WTC11 (cell line): ENCODE measurements at regions of chr17 and their contacts with region 1.

Region 1: GRCh38 chr17:82037113-82037888 is at the start of gene DCXR:
- DNase-seq: peak; percentile 99
- ATAC-seq: peak; percentile 90
- H3K4me3 Mint-ChIP-seq: peak within 1 kb of the TSS; percentile 75
- H3K27ac Mint-ChIP-seq: peak within 1 kb of the TSS; percentile 95
- H3K4me1 Mint-ChIP-seq: peaks cover 33% of the 10 kb centered on the region
- H3K27me3 Mint-ChIP-seq: peaks cover 10% of the 10 kb centered on the region
- CTCF ChIP-seq: peak; percentile 73
- total RNA-seq, gene DCXR: 114 to 130 TPM (median 120 TPM) in 3 replicates

Region 2: GRCh38 chr17:81840826-81841778 is 196.2 kb before region 1 on chr17:
- CTCF ChIA-PET with region 1: no interaction called
- POLR2A ChIA-PET with region 1: no interaction called
- DNase-seq: no peak
- ATAC-seq: peak; percentile 22
- H3K4me3 Mint-ChIP-seq: no peak overlapping the region
- H3K27ac Mint-ChIP-seq: no peak overlapping the region
- H3K4me1 Mint-ChIP-seq: no peaks in the 10 kb centered on the region
- H3K27me3 Mint-ChIP-seq: no peaks in the 10 kb centered on the region
- CTCF ChIP-seq: no peak

Region 3: DNA sequence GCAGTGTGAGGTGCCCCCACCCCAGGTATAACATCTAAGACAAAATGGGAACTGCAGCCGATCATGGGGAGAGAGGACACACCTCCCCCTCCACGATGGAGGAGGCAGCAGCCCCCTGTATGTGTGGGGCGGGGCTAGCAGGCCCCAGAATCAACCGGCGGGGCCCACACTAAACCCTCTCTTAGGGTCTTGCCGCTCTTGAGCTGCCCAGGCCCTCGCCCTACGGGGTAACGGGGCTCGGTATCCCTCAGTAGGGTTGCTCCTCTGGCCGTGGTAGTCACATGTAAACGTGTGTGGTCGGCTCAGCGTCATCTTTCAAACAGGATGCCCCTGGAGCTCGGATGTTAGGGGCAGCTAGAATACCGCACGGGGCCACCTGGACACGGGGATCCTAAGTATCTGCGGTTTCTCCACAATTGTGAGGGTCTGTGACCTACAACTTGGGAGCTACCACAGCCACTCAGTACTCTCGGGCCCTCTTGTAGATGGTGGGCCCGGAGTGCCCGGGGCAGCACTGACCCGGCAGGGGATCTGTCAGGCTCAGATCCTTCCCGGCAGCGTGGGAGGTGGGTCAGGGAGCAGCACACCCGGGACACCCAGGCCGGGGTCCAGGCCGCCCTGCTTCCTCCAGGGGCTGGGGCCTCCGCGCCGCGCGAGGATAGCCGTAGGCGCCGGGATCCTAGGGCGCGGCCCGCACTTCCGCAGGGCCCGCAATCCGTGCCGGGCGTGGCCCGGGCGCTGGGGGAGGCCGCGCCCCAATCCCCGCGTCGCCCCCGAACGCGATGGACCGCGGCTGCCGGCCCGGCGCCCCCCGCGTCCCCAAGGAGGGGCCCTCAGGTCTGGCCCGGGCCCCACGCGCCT is 167.0 kb before region 1 on chr17:
- CTCF ChIA-PET with region 1: interaction called, 12 read pairs
- POLR2A ChIA-PET with region 1: no interaction called
- DNase-seq: peak; percentile 34
- ATAC-seq: peak; percentile 4
- H3K4me3 Mint-ChIP-seq: peak overlapping the region; percentile 76
- H3K27ac Mint-ChIP-seq: peak overlapping the region; percentile 88
- H3K4me1 Mint-ChIP-seq: peaks cover 16% of the 10 kb centered on the region
- H3K27me3 Mint-ChIP-seq: no peaks in the 10 kb centered on the region; the same call in 1 of the 2 replicates
- CTCF ChIP-seq: no peak

Region 4: DNA sequence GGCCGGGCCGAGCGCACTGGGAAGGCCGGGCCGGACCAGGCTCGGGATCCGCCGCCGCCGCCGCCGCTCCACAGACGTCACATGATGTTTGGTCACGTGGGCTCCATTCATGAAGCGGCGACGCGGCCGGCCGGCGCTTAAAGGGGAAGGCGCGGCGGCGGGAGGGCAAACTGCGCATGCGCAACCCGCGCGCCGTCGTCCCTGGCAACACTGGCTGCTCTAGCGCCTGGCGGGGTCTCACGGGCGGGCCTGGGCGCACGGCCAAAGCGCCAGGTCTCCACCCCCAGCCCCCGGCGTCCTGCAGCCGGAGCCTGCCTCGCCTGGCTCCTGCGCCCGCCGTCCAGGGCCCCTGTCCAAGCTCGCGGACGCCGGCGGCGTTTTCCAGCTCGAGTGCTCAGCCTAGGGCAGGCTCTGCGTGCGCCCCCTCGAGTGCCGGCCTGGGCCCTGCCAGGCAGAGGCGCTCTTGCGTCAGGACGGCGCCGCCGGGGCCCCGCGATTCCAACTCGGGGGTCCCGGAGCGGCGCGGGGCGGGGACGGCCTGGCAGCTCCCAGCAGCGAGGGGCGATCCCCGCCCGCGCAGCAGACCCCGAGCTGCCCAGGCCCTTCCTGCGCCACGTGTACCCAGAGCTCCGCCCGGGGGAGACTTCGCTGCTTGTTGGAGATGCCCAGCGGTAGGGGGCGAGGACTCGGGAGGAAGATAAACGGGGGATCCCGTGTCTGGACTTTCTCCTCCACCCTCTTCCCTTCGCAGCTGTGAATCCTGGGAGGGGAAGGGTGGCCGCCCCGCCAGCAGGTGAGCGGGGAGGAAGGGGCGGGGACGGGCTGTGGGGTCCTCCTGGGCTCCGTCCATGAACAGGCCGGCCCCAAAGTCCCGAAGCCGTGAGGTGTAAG is 109.4 kb before region 1 on chr17 and contains the start of gene MAFG:
- CTCF ChIA-PET with region 1: interaction called, 16 read pairs
- POLR2A ChIA-PET with region 1: no interaction called
- DNase-seq: peak; percentile 90
- ATAC-seq: peak; percentile 43
- H3K4me3 Mint-ChIP-seq: peak within 1 kb of the TSS; percentile 75
- H3K27ac Mint-ChIP-seq: no peak within 1 kb of the TSS
- H3K4me1 Mint-ChIP-seq: peaks cover 27% of the 10 kb centered on the region
- H3K27me3 Mint-ChIP-seq: peaks cover 3% of the 10 kb centered on the region; the same call in 1 of the 2 replicates
- CTCF ChIP-seq: no peak
- total RNA-seq, gene MAFG: 24.2 to 29.8 TPM (median 24.3 TPM) in 3 replicates

Region 5: DNA sequence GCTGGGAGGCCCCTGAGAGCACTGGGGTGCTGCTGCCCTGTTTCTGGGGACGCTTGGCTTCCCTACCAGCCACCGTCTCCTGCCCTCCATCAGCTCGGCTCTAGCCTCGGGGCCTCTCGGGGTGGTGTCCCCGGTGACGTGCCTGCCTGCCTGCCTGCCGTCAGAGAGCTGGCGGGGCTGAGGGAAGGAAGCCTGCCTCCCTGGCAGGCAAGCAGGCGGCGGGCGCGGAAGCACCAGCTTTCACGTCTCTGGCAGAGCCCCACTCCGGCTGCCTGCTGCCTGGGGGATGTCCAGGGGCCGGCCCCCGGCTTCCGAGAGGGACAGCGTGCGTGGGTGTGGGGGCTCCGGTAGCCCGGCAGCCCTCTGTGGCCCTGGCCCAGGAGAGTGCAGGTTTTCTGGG is 24.0 kb before region 1 on chr17:
- CTCF ChIA-PET with region 1: interaction called, 119 read pairs
- POLR2A ChIA-PET with region 1: no interaction called
- DNase-seq: no peak
- ATAC-seq: no peak
- H3K4me3 Mint-ChIP-seq: no peak overlapping the region
- H3K27ac Mint-ChIP-seq: no peak overlapping the region
- H3K4me1 Mint-ChIP-seq: no peaks in the 10 kb centered on the region
- H3K27me3 Mint-ChIP-seq: no peaks in the 10 kb centered on the region
- CTCF ChIP-seq: no peak

Region 6: GRCh38 chr17:82051776-82052637 is 14.7 kb after region 1 on chr17 and contains the starts of genes GPS1 and RFNG:
- CTCF ChIA-PET with region 1: interaction called, 18 read pairs
- POLR2A ChIA-PET with region 1: interaction called, 6 read pairs
- DNase-seq: peak; percentile 71
- ATAC-seq: peak; percentile 63
- H3K4me3 Mint-ChIP-seq: peak within 1 kb of the TSS; percentile 89
- H3K27ac Mint-ChIP-seq: peak within 1 kb of the TSS; percentile 79
- H3K4me1 Mint-ChIP-seq: peaks cover 4% of the 10 kb centered on the region
- H3K27me3 Mint-ChIP-seq: no peaks in the 10 kb centered on the region
- CTCF ChIP-seq: no peak
- total RNA-seq, gene GPS1: 166 to 181 TPM (median 167 TPM) in 3 replicates
- total RNA-seq, gene RFNG: 40.9 to 42.3 TPM (median 41.6 TPM) in 3 replicates

Region 7: GRCh38 chr17:82098072-82098821 is 60.9 kb after region 1 on chr17 and contains the start of gene FASN:
- CTCF ChIA-PET with region 1: interaction called, 18 read pairs
- POLR2A ChIA-PET with region 1: interaction called, 11 read pairs
- DNase-seq: peak; percentile 92
- ATAC-seq: peak; percentile 75
- H3K4me3 Mint-ChIP-seq: peak within 1 kb of the TSS; percentile 69
- H3K27ac Mint-ChIP-seq: no peak within 1 kb of the TSS
- H3K4me1 Mint-ChIP-seq: peaks cover 28% of the 10 kb centered on the region
- H3K27me3 Mint-ChIP-seq: no peaks in the 10 kb centered on the region
- CTCF ChIP-seq: no peak
- total RNA-seq, gene FASN: 611 to 742 TPM (median 654 TPM) in 3 replicates

Region 8: DNA sequence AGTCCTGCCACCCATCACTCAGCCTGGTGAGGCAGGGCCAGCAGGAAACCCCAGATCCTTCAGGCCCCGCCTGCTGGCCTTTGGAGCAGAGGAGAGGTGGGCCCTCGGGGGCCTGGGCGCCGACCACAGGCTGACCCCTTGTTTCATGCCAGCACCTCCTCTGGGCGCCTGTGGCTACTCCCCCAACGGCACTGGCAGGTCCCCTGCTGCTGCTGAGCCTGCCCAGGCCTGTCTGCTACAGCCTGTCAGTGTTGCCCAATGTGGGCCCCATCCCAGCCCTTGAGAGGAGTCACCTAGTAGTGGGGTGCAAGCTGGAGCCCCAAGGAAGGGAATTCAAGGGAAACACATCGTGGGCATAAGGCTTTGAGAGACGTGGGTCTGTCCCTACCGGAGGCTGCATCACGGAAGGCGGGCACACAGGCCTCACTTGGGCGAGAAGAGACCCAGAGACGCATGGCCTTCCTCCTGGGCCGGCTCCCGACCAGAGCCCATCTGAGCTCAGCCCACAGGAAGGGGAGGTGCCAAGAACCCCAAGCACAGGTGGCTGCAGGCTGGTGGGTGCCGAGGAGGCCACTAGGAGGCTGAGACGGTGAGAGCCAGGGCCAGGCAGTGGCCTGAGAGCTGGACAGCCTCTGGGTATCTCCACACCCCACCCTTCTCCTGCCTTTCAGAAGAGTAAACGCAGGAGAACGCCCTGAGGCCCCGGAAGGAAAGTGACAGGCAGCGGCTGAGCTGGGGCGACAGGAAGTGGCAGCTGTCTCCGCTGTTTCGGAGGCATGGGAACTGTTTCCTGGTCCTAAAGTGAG is 68.8 kb after region 1 on chr17:
- CTCF ChIA-PET with region 1: interaction called, 16 read pairs
- POLR2A ChIA-PET with region 1: interaction called, 5 read pairs
- DNase-seq: peak; percentile 77
- ATAC-seq: peak; percentile 83
- H3K4me3 Mint-ChIP-seq: no peak overlapping the region
- H3K27ac Mint-ChIP-seq: peak overlapping the region; percentile 53
- H3K4me1 Mint-ChIP-seq: peaks cover 44% of the 10 kb centered on the region
- H3K27me3 Mint-ChIP-seq: peaks cover 32% of the 10 kb centered on the region
- CTCF ChIP-seq: no peak